Naive thymus-derived CD4-positive, alpha-beta T cell (primary cell): ENCODE measurements at regions of chr2 and their contacts with region 1.

Region 1: GRCh38 chr2:171433763-171434670 is at the starts of genes DCAF17 and METTL8:
- DNase-seq: peak; percentile 84 to 93 (median 91)
- ATAC-seq: peak; percentile 95
- H3K4me3 ChIP-seq: peak within 1 kb of the TSS; percentile 87
- H3K4me3 Mint-ChIP-seq: peak within 1 kb of the TSS; percentile 82 to 97 (median 90)
- H3K27ac ChIP-seq: peak within 1 kb of the TSS; percentile 92
- H3K27ac Mint-ChIP-seq: peak within 1 kb of the TSS; percentile 84 to 98 (median 95)
- H3K4me1 ChIP-seq: peaks cover 15 to 28% of the 10 kb centered on the region in 2 donors
- H3K4me1 Mint-ChIP-seq: peaks cover 30 to 56% (median 51%) of the 10 kb centered on the region in 7 donors
- H3K27me3 ChIP-seq: no peaks in the 10 kb centered on the region
- H3K27me3 Mint-ChIP-seq: no peaks in the 10 kb centered on the region
- total RNA-seq, gene DCAF17: 19.0 to 40.3 (median 23.7) TPM
- total RNA-seq, gene METTL8: 11.8 to 21.6 (median 14.8) TPM

Region 2: GRCh38 chr2:170554278-170554955 is 879.6 kb before region 1 on chr2:
- CTCF ChIA-PET with region 1: no interaction called
- POLR2A ChIA-PET with region 1: no interaction called
- intact Hi-C with region 1: no loop called
- DNase-seq: no peak
- ATAC-seq: no peak
- H3K4me3 ChIP-seq: no peak overlapping the region
- H3K4me3 Mint-ChIP-seq: no peak overlapping the region
- H3K27ac ChIP-seq: no peak overlapping the region
- H3K27ac Mint-ChIP-seq: no peak overlapping the region
- H3K4me1 ChIP-seq: no peaks in the 10 kb centered on the region
- H3K4me1 Mint-ChIP-seq: no peaks in the 10 kb centered on the region
- H3K27me3 ChIP-seq: no peaks in the 10 kb centered on the region
- H3K27me3 Mint-ChIP-seq: peaks cover 0 to 19% (median 5%) of the 10 kb centered on the region in 5 donors

Region 3: DNA sequence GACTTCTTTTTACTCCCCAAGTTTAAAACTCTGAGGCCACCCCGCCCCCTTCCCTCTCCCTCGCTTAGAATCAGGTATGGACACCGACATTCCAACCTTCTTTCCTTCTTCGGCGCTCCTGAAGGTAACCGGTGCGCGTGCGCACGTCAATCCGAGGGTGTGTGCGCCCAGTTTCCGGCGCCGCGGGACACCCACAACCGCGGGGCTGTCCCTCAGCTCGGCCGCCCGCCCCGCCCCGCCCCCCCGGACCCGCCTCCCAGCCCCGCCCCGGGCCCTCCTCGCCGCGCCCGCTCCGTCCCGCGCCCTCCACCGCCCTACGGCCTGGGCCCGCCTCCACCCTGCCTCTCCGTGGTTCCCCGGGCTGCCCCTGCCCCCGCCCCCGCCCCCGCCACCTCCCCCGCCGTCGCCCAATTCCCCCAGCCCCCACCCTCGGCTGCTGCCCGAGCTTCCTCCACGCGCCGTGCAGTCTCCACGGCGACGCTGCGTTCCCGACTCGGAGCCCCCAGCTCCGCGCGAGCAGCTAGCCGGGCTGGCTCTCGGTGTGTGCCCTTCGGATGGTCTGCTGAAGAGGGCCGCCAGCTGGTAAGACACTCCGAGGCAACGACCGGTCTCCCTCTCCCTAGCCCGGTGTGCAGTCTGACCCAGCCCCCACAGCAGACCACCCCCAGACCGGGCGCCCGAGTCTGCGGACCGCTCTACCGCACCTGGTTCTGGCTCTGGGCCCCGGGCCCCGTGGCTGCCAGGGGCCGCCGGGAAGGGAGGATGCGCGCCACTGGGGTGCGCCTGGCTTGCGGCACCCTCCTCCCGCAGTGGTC is 663.2 kb before region 1 on chr2:
- CTCF ChIA-PET with region 1: no interaction called
- POLR2A ChIA-PET with region 1: no interaction called
- intact Hi-C with region 1: loop called in 1 of 2 experiments (anchors 5 kb)
- DNase-seq: peak; percentile 31 to 77 (median 50)
- ATAC-seq: peak; percentile 91
- H3K4me3 ChIP-seq: peak overlapping the region; percentile 74
- H3K4me3 Mint-ChIP-seq: peak overlapping the region; percentile 77 to 91 (median 84)
- H3K27ac ChIP-seq: peak overlapping the region; percentile 51
- H3K27ac Mint-ChIP-seq: peak overlapping the region in 6 of 9 donors; percentile 27 to 80 (median 55)
- H3K4me1 ChIP-seq: peaks cover 4 to 8% of the 10 kb centered on the region in 2 donors
- H3K4me1 Mint-ChIP-seq: peaks cover 6 to 34% (median 18%) of the 10 kb centered on the region in 7 donors
- H3K27me3 ChIP-seq: no peaks in the 10 kb centered on the region
- H3K27me3 Mint-ChIP-seq: peaks cover 0 to 52% (median 10%) of the 10 kb centered on the region in 5 donors

Region 4: GRCh38 chr2:171160119-171160955 is 273.7 kb before region 1 on chr2 and contains the start of gene TLK1:
- CTCF ChIA-PET with region 1: interaction called, 3 read pairs
- POLR2A ChIA-PET with region 1: interaction called, 4 read pairs
- intact Hi-C with region 1: loop called (anchors 1 kb)
- DNase-seq: peak; percentile 63 to 84 (median 81)
- ATAC-seq: peak; percentile 78
- H3K4me3 ChIP-seq: peak within 1 kb of the TSS; percentile 70
- H3K4me3 Mint-ChIP-seq: peak within 1 kb of the TSS; percentile 87 to 98 (median 96)
- H3K27ac ChIP-seq: peak within 1 kb of the TSS; percentile 99
- H3K27ac Mint-ChIP-seq: peak within 1 kb of the TSS; percentile 88 to 98 (median 97)
- H3K4me1 ChIP-seq: peaks cover 30 to 39% of the 10 kb centered on the region in 2 donors
- H3K4me1 Mint-ChIP-seq: peaks cover 49 to 70% (median 58%) of the 10 kb centered on the region in 7 donors
- H3K27me3 ChIP-seq: no peaks in the 10 kb centered on the region
- H3K27me3 Mint-ChIP-seq: no peaks in the 10 kb centered on the region
- total RNA-seq, gene TLK1: 96.9 to 191 (median 141) TPM

Region 5: GRCh38 chr2:171598713-171599319 is 164.8 kb after region 1 on chr2:
- CTCF ChIA-PET with region 1: no interaction called
- POLR2A ChIA-PET with region 1: no interaction called
- intact Hi-C with region 1: loop called in 1 of 2 experiments (anchors 1 kb)
- DNase-seq: peak in 7 of 9 donors; percentile 22 to 64 (median 51)
- ATAC-seq: peak; percentile 94
- H3K4me3 ChIP-seq: no peak overlapping the region
- H3K4me3 Mint-ChIP-seq: no peak overlapping the region
- H3K27ac ChIP-seq: no peak overlapping the region
- H3K27ac Mint-ChIP-seq: no peak overlapping the region
- H3K4me1 ChIP-seq: peaks cover 0 to 3% of the 10 kb centered on the region in 2 donors
- H3K4me1 Mint-ChIP-seq: peaks cover 0 to 6% (median 0%) of the 10 kb centered on the region in 7 donors
- H3K27me3 ChIP-seq: no peaks in the 10 kb centered on the region
- H3K27me3 Mint-ChIP-seq: peaks cover 0 to 25% (median 4%) of the 10 kb centered on the region in 5 donors

Region 6: DNA sequence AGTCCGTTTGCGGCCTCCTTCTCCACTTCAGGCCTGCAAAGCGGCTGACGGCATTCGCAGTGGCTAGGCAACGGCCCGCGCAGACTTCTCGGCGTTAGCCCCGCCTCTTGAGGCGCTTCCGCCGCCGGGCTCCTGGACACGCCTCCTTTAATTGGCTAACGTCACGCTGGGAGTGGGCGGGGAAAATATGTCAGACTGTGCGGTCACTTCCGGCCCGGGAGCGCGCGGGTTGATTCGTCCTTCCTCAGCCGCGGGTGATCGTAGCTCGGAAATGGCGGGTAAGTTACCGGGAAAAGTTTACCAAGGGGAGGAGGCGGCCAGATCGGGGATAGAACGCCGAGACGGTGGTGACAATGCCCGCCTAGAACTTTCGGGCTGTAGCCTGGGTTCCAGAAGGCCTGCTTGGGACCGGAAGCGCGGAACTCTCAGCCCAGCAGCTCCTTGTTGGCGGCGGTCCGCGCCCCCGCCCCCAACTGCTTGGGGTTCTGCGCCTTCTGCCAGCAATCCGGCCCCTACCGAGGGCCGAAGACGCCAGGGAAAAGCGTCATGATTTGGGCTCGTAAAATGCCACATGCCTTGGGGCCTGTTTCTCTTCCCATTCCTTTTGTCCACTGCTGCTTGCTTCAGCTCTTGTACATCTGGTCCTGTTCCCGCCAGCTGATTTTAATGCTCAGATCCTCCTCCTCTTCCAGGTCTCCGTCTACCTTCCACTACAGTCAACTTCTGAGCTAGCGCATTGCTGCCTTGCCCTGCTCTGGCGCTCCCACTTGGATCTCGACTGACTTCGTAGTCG is 488.4 kb after region 1 on chr2 and contains the start of gene HAT1:
- CTCF ChIA-PET with region 1: no interaction called
- POLR2A ChIA-PET with region 1: no interaction called
- intact Hi-C with region 1: loop called (anchors 1 to 10 kb)
- DNase-seq: peak; percentile 92 to 98 (median 97)
- ATAC-seq: peak; percentile 99
- H3K4me3 ChIP-seq: peak within 1 kb of the TSS; percentile 75
- H3K4me3 Mint-ChIP-seq: peak within 1 kb of the TSS; percentile 90 to 100 (median 99)
- H3K27ac ChIP-seq: peak within 1 kb of the TSS; percentile 93
- H3K27ac Mint-ChIP-seq: peak within 1 kb of the TSS; percentile 96 to 100 (median 99)
- H3K4me1 ChIP-seq: peaks cover 13 to 17% of the 10 kb centered on the region in 2 donors
- H3K4me1 Mint-ChIP-seq: peaks cover 20 to 50% (median 42%) of the 10 kb centered on the region in 7 donors
- H3K27me3 ChIP-seq: no peaks in the 10 kb centered on the region
- H3K27me3 Mint-ChIP-seq: no peaks in the 10 kb centered on the region
- total RNA-seq, gene HAT1: 22.1 to 55.4 (median 26.4) TPM